ENCODE measurements at regions of chr2 and their contacts with region 1.

Region 1: DNA sequence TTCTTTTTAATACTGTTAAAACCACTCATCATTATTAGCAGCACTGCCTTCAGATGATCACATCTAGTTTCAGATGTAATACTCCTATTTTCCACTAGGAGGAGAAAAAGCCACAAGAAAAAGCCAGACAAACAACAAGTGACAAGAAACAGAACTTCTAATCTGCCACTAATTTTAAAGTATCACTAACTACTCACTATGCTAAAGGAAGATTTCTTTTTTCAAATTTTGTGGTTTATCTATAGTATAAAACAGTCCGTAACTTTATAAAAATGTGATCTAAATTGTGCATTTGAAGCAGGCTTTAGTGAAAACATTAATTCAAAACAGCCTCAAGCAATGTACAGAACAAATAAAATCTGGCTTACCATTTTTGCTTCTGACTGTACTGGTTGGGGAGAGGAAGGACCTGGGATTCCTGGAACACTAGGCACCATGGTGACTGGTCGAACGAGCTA is 56.8 kb downstream of the ATF2 start:
- DNase-seq: no peak
- ATAC-seq: peak; percentile 53
- H3K4me3 ChIP-seq: no peak overlapping the region
- H3K4me1 ChIP-seq: no peaks in the 10 kb centered on the region
- CTCF ChIP-seq: peak; percentile 61

Region 2: DNA sequence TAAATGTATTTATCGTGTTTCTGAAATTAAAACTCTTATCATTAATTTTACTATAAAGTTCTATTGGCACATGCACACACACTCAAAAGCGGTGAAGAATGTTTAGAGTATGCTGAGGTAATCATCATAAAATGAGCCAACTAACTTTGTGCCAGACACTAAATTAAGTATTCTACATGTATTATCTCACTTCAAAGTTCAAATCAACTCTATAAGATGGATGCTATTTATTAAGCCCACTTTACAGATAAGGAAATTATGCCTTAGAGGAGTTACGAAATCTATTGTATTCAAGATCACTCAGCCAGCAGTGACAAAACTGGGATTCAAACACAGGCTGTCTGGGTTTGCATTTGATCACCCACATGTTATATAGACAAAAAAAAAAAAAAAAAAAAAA is 887.8 kb before region 1 on chr2:
- intact Hi-C with region 1: no loop called
- DNase-seq: no peak
- ATAC-seq: no peak
- H3K4me3 ChIP-seq: no peak overlapping the region
- H3K4me1 ChIP-seq: no peaks in the 10 kb centered on the region
- CTCF ChIP-seq: no peak

Region 3: GRCh38 chr2:174835797-174836255 is 275.4 kb before region 1 on chr2:
- intact Hi-C with region 1: no loop called
- DNase-seq: no peak
- ATAC-seq: no peak
- H3K4me3 ChIP-seq: no peak overlapping the region
- H3K4me1 ChIP-seq: no peaks in the 10 kb centered on the region
- CTCF ChIP-seq: no peak

Region 4: DNA sequence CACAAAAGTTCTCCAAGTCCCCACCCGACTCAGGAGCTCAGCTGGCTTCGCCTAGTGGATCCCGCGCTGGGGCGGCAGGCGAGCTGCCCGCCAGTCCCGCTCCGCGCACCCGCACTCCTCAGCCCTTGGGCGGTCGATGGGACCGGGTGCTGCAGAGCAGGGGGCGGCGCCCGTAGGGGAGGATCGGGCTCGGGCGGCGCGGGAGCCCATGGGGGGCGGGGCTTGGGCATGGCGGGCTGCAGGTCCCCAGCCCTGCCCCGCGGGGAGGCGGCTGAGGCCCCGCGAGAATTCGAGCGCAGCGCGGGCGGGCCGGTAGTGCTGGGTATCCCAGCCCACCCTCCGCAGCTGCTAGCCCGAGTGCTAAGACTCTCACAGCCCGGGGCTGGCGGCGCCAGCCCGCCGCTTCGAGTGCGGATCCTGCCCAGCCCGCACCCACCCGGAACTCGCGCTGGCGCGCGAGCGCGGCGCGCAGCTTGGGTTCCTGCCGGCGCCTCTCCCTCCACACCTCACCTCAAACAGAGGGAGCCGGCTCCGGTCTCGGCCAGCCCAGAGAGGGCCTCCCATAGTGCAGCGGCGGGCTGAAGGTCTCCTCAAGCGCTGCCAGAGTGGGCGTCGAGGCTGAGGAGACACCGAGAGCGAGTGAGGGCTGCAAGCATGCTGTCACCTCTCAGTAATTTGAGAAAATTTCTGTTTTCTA is 145.8 kb after region 1 on chr2:
- intact Hi-C with region 1: loop called in 1 of 2 experiments (anchors 10 kb)
- DNase-seq: no peak
- ATAC-seq: peak; percentile 49
- H3K4me3 ChIP-seq: no peak overlapping the region
- H3K4me1 ChIP-seq: no peaks in the 10 kb centered on the region
- CTCF ChIP-seq: no peak